Activated CD8-positive, alpha-beta T cell treated with anti-CD3 and anti-CD28 coated beads, Interleukin-2, amount 10 ng/mL, durations not matched to agents 7 days and 5 days (primary cell): ENCODE measurements at regions of chr19 and their contacts with region 1.

Region 1: DNA sequence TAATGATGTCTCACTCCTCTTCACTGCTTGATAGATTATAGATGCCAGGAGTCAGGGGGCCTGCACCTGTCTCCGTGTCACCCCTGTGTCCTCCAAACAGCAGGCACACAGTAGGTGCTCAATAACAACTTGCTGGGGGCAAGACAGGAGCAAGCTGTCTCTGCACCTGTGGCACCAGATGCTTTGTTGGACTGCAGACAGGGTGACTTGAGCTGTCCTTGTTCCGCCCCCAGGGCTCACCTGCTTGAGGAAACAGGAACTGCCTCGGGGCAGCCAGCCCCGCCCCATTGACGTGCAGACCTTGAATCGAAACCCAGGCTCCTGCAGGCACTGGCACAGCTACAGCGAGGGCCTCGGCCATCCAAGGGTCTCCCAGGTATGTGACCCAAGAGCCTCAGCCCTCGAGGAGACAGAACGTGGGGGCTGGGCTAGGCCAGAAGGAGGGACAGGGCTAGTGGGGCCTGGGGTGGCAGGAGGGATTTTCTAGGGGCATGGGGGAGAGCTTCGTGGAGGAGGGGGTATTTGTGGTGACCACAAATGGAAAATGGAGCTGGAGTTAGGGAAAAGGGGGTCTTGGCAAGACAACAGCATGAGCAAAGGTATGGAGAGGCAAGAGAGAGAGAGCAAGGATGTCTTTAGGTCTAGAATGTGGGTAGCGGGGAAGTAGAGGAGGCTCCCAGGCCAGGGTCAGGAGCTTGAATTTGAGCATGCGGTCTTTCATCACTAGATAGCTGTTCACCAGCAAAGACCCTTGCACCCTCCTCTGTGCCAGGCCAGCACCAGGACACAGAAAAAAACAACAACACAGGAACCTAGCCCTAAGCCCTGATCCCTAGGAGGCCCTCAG is at the start of gene HSH2D:
- DNase-seq: peak; percentile 94
- ATAC-seq: peak; percentile 95
- H3K4me3 Mint-ChIP-seq: peak within 1 kb of the TSS; percentile 96
- H3K27ac Mint-ChIP-seq: peak within 1 kb of the TSS; percentile 99
- H3K4me1 Mint-ChIP-seq: peaks cover 65% of the 10 kb centered on the region
- H3K27me3 Mint-ChIP-seq: no peaks in the 10 kb centered on the region
- total RNA-seq, gene HSH2D: 83.6 to 84.3 TPM

Region 2: DNA sequence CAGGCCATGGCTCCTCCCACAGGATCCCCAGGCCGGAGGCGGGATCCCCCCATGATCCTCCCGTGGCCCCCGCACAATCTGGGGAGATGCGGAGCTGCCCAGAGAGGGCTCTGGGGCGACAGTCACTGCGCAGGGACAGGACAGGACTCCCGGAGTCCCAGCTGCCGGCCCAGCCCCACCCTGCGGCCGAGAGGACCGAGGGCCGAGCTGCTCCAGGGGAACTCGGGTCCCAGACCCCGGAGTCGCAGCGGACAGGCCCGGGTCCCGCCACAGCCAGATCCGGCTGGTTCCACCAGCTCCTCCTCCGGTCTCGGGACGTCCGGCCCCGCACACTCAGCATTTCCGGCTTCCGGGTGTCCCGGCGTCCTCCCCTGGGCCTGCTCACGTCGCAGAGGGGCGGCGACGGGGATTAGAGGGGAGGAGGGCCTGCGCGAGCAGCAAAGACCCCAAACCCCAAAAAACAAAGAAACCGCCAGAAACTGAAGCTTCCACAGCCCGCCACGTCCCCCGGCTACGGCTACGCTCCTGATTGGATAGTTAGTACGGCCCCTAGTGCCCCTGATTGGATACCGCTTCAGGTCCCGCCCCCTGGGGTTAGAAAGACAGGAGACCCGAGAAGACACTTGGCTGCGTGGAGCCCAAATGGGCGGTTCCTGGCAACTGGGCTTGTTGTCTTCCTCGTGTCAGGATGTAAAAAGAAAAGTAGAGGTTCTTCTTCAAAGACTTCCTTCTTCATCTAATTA is 306.9 kb before region 1 on chr19:
- CTCF ChIA-PET with region 1: no interaction called
- POLR2A ChIA-PET with region 1: interaction called, 16 read pairs
- DNase-seq: peak; percentile 99
- ATAC-seq: peak; percentile 95
- H3K4me3 Mint-ChIP-seq: peak overlapping the region; percentile 84
- H3K27ac Mint-ChIP-seq: peak overlapping the region; percentile 98
- H3K4me1 Mint-ChIP-seq: peaks cover 30% of the 10 kb centered on the region
- H3K27me3 Mint-ChIP-seq: no peaks in the 10 kb centered on the region

Region 3: GRCh38 chr19:16057062-16057461 is 86.6 kb before region 1 on chr19:
- CTCF ChIA-PET with region 1: no interaction called
- POLR2A ChIA-PET with region 1: no interaction called
- DNase-seq: no peak
- ATAC-seq: no peak
- H3K4me3 Mint-ChIP-seq: no peak overlapping the region
- H3K27ac Mint-ChIP-seq: no peak overlapping the region
- H3K4me1 Mint-ChIP-seq: peaks cover 9% of the 10 kb centered on the region
- H3K27me3 Mint-ChIP-seq: peaks cover 20% of the 10 kb centered on the region

Region 4: GRCh38 chr19:16070366-16070990 is 73.1 kb before region 1 on chr19:
- CTCF ChIA-PET with region 1: interaction called, 7 read pairs
- POLR2A ChIA-PET with region 1: interaction called, 14 read pairs
- DNase-seq: peak; percentile 92
- ATAC-seq: peak; percentile 95
- H3K4me3 Mint-ChIP-seq: no peak overlapping the region
- H3K27ac Mint-ChIP-seq: no peak overlapping the region
- H3K4me1 Mint-ChIP-seq: peaks cover 51% of the 10 kb centered on the region
- H3K27me3 Mint-ChIP-seq: no peaks in the 10 kb centered on the region

Region 5: GRCh38 chr19:16076154-16076957 is 67.3 kb before region 1 on chr19 and contains the start of gene TPM4:
- CTCF ChIA-PET with region 1: interaction called, 4 read pairs
- POLR2A ChIA-PET with region 1: interaction called, 20 read pairs
- DNase-seq: peak; percentile 95
- ATAC-seq: peak; percentile 64
- H3K4me3 Mint-ChIP-seq: peak within 1 kb of the TSS; percentile 82
- H3K27ac Mint-ChIP-seq: peak within 1 kb of the TSS; percentile 96
- H3K4me1 Mint-ChIP-seq: peaks cover 71% of the 10 kb centered on the region
- H3K27me3 Mint-ChIP-seq: no peaks in the 10 kb centered on the region
- total RNA-seq, gene TPM4: 424 to 436 TPM

Region 6: DNA sequence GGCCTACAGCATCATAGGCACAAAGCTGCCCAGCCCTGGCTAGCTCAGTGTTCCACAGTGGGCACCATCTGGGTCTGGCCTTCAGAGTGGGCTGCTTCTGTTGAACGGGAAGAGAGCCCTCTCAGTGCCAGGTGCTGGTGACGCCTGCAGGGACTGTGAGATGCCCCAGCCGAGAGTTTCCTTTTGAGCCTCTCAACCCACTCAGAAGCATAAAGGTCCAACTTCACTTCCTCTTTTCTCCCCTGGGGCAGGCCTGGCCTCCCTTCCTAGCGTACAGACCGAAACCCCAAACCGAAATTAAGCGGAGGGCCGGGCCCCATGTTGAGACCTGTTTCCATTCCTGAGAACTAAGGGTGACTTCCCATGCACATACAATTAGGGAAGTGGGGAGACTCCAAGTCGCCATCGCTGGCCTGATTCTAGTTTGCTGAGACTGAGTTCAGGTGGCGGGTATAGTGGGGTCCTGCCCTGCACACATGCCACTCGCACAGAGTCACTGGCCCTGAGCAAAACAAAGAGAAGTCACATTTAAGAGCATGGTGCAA is 25.1 kb before region 1 on chr19:
- CTCF ChIA-PET with region 1: interaction called, 4 read pairs
- POLR2A ChIA-PET with region 1: interaction called, 42 read pairs
- DNase-seq: peak; percentile 50
- ATAC-seq: peak; percentile 45
- H3K4me3 Mint-ChIP-seq: peak overlapping the region; percentile 68
- H3K27ac Mint-ChIP-seq: peak overlapping the region; percentile 89
- H3K4me1 Mint-ChIP-seq: peaks cover 80% of the 10 kb centered on the region
- H3K27me3 Mint-ChIP-seq: no peaks in the 10 kb centered on the region

Region 7: DNA sequence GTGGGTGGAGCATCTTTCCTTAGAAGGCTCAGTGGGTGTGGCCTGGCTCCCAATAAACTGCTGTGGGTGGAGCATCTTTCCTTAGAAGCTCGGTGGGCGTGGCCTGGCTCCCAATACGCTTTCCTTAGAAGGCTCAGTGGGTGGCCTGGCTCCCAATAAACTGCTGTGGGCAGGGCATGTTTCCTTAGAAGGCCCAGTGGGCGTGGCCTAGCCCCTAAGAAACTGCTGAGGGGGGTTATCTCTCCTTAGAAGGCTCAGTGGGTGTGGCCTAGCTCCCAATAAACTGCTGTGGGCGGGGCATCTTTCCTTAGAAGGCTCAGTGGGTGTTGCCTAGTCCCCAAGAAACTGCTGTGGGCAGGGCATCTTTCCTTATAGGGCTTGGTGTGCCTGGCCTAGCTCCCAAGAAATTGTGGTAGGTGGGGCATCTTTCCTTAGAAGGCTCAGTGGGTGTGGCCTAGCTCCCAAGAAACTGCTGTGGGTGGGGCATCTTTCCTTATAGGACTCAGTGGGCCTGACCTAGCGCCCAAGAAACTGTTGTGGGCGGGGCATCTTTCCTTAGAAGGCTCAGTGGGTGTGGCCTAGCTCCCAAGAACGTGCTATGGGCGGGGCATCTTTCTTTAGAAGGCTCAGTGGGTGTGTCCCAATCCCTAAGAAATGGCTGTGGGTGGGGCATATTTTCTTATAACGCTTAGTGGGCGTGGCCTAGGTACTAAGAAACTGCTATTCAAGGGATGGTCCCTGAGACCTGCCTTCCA is 10.1 kb after region 1 on chr19:
- CTCF ChIA-PET with region 1: interaction called, 4 read pairs
- POLR2A ChIA-PET with region 1: interaction called, 15 read pairs
- DNase-seq: peak; percentile 39
- ATAC-seq: peak; percentile 36
- H3K4me3 Mint-ChIP-seq: no peak overlapping the region
- H3K27ac Mint-ChIP-seq: no peak overlapping the region
- H3K4me1 Mint-ChIP-seq: peaks cover 64% of the 10 kb centered on the region
- H3K27me3 Mint-ChIP-seq: no peaks in the 10 kb centered on the region

Region 8: GRCh38 chr19:16476401-16476800 is 332.8 kb after region 1 on chr19:
- CTCF ChIA-PET with region 1: no interaction called
- POLR2A ChIA-PET with region 1: no interaction called
- DNase-seq: no peak
- ATAC-seq: no peak
- H3K4me3 Mint-ChIP-seq: no peak overlapping the region
- H3K27ac Mint-ChIP-seq: no peak overlapping the region
- H3K4me1 Mint-ChIP-seq: no peaks in the 10 kb centered on the region
- H3K27me3 Mint-ChIP-seq: peaks cover 6% of the 10 kb centered on the region